Common myeloid progenitor, CD34-positive (primary cell): ENCODE measurements at regions of chr12 and their contacts with region 1.

Region 1: GRCh38 chr12:62799126-62799736 is 135.7 kb downstream of the PPM1H start:
- DNase-seq: peak; percentile 73 to 86 (median 82)
- H3K4me3 ChIP-seq: no peak overlapping the region
- H3K27ac ChIP-seq: no peak overlapping the region
- H3K4me1 ChIP-seq: no peaks in the 10 kb centered on the region
- H3K27me3 ChIP-seq: no peaks in the 10 kb centered on the region

Region 2: GRCh38 chr12:62435303-62436163 is 363.7 kb before region 1 on chr12:
- CTCF ChIA-PET with region 1: interaction called, 15 read pairs
- POLR2A ChIA-PET with region 1: interaction called, 5 read pairs
- DNase-seq: peak; percentile 68 to 83 (median 79)
- H3K4me3 ChIP-seq: peak overlapping the region; percentile 52 to 89 (median 79)
- H3K27ac ChIP-seq: no peak overlapping the region
- H3K4me1 ChIP-seq: peaks cover 0 to 16% (median 15%) of the 10 kb centered on the region in 4 experiments
- H3K27me3 ChIP-seq: no peaks in the 10 kb centered on the region

Region 3: DNA sequence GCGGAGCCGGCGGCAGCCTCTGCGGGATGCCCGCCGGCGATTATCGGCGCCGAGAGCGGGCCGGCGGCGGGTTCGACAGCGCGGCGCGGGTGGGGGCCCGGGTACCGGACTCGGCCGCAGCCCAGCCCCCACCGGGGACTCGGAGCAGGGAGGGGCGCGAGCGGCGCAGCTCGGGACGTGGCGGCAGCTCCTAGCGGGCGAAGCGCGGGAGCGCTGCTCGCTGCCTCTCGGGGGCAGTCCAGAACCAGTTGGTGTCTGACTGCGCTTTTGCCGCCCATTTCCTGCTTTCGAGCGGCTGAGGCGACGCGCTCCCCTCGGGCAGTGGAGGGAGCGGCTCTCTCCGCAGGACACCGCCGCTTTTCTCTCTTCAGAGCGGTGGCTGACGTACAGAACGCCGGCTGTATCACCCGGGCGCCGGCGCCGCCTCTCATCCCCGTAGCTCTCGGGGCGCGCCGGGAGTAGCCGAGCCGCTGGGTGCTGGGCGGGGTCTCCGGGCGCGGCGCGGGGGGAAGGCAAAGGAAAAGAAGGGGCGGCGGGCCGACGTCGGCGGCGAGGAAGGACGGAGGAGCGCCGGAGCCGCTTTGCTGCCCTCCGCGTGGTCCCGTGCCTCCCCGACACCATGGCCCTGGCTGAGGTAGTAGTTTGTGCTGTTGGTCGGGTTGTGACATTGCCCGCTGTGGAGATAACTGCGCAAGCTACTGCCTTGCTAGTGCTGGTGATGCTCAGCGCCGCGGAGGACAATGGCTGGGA is 196.0 kb before region 1 on chr12:
- CTCF ChIA-PET with region 1: interaction called, 23 read pairs
- POLR2A ChIA-PET with region 1: no interaction called
- DNase-seq: peak; percentile 91 to 95 (median 93)
- H3K4me3 ChIP-seq: peak overlapping the region; percentile 77 to 94 (median 92)
- H3K27ac ChIP-seq: peak overlapping the region; percentile 99
- H3K4me1 ChIP-seq: peaks cover 18 to 35% (median 22%) of the 10 kb centered on the region in 4 experiments
- H3K27me3 ChIP-seq: no peaks in the 10 kb centered on the region

Region 4: DNA sequence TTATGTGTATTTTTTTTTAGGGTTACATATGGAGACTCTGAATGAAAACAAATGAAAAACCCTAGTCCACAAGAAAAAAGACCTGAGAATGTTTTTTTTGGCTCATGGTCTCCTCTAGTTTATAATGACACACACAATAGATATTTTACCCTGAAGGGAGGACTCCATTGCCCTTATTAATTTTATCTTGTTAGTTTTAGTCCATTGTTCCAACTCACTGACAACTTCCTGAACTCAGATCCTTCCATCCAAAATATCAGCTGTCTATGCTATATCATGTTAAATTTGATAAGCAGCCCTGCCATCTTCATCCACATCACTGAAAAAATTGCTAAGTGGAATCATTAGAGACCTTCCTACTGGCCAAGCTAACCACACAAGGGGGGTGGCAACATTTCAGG is 100.5 kb before region 1 on chr12:
- CTCF ChIA-PET with region 1: no interaction called
- POLR2A ChIA-PET with region 1: no interaction called
- DNase-seq: no peak
- H3K4me3 ChIP-seq: no peak overlapping the region
- H3K27ac ChIP-seq: no peak overlapping the region
- H3K4me1 ChIP-seq: peaks cover 7 to 38% (median 24%) of the 10 kb centered on the region in 4 experiments
- H3K27me3 ChIP-seq: no peaks in the 10 kb centered on the region

Region 5: DNA sequence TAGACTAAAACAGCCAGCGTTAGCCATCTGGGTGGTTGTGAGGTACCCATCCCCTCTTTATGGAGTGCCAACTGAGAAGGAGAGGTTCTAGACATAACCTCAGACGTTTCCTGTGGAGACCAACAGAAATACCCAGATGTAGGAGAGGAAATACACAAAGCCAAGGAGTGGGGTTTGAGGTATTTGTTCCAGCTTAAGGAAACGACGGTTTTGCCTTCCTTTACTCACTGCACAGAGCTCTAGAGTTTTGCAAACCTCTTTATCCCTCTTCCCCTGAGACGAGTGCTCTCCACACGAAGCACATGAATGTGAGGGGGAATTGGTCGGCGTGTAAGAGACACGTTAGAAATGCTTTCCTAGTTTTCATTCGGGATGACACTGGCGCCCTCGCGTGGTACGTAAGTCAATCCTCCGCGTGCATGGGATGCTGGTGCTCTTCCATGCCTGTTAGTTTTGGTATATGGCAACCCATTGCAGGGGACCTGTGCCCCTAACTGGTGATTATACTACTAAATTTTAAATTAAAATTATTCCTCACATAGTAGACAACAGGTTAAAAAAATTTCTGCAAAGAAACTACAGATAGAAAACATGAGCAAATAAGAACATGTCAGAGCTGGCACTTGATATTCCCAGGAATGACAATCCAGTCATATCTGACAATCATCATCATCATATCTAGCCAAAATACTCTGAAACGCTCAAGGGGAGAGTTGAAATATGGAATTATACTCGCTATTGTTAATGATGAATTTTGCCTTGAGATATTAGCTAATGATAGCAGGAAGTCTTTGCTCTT is 14.0 kb after region 1 on chr12:
- CTCF ChIA-PET with region 1: interaction called, 20 read pairs
- POLR2A ChIA-PET with region 1: no interaction called
- DNase-seq: peak; percentile 73 to 83 (median 79)
- H3K4me3 ChIP-seq: peak overlapping the region in 4 of 7 experiments; percentile 21 to 62 (median 54)
- H3K27ac ChIP-seq: peak overlapping the region in 1 of 2 experiments; percentile 11
- H3K4me1 ChIP-seq: peaks cover 5 to 62% (median 30%) of the 10 kb centered on the region in 4 experiments
- H3K27me3 ChIP-seq: no peaks in the 10 kb centered on the region

Region 6: DNA sequence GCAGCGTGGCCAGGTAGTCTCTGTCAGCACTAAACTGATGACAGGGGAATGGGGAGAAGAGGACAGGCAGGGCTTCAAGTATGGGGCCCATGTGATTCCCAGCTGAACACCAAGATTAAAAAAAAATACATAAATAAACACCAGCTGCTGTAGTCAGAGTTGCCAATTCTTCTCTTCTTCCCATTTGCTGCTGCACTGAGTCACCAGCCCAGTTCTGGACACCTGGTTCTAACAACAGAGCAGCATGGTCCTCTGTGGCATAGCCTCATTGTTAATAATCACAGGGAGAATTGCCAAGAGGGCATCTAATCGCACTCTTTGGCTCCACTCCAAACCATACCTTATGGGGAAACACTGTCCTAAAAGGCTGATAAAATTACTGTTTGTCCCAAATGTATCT is 120.6 kb after region 1 on chr12:
- CTCF ChIA-PET with region 1: no interaction called
- POLR2A ChIA-PET with region 1: no interaction called
- DNase-seq: peak in 2 of 3 donors; percentile 54 to 65
- H3K4me3 ChIP-seq: no peak overlapping the region
- H3K27ac ChIP-seq: no peak overlapping the region
- H3K4me1 ChIP-seq: peaks cover 0 to 8% (median 6%) of the 10 kb centered on the region in 4 experiments
- H3K27me3 ChIP-seq: no peaks in the 10 kb centered on the region

Region 7: DNA sequence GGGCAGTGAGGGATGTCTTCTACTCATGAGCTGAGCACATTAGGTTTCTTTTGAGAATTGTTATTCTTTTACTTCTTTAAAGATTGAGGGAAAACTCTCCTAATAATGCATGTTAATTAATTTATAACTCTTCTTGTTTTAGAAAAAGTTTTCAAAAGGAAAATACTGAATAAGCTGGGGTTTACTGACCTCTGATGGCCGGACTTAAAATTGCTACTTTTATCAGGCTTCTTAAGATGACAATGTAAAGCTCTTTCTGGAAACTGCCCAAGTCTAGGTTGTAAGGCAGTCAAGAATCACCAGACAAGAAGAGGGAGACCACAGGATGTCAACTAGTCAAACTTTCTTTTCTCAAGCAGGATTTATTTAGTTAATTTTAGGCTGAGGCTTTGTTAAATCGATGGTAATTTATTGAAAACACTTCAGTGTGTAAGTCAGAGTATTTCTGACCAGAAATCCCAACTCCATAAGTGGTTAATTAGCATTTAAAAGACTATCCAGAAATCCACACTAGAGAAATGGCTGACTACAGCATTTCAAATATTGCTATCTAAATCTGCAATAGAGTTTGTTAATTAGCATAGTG is 269.7 kb after region 1 on chr12:
- CTCF ChIA-PET with region 1: interaction called, 54 read pairs
- POLR2A ChIA-PET with region 1: no interaction called
- DNase-seq: peak; percentile 72 to 87 (median 83)
- H3K4me3 ChIP-seq: no peak overlapping the region
- H3K27ac ChIP-seq: no peak overlapping the region
- H3K4me1 ChIP-seq: peaks cover 3 to 13% (median 8%) of the 10 kb centered on the region in 4 experiments
- H3K27me3 ChIP-seq: no peaks in the 10 kb centered on the region